CD4-positive, alpha-beta memory T cell (primary cell): ENCODE measurements at regions of chr9 and their contacts with region 1.

Region 1: GRCh38 chr9:114653556-114654159 is 3.9 kb downstream of the TEX53 start:
- DNase-seq: peak; percentile 77 to 86 (median 83)
- H3K4me3 ChIP-seq: no peak overlapping the region
- H3K4me3 Mint-ChIP-seq: no peak overlapping the region
- H3K27ac ChIP-seq: no peak overlapping the region
- H3K27ac Mint-ChIP-seq: peak overlapping the region in 4 of 7 donors; percentile 38 to 75 (median 64)
- H3K4me1 ChIP-seq: peaks cover 12% of the 10 kb centered on the region
- H3K4me1 Mint-ChIP-seq: peaks cover 7 to 18% (median 14%) of the 10 kb centered on the region in 4 donors
- H3K27me3 ChIP-seq: no peaks in the 10 kb centered on the region
- H3K27me3 Mint-ChIP-seq: no peaks in the 10 kb centered on the region

Region 2: GRCh38 chr9:114339130-114339908 is 314.3 kb before region 1 on chr9:
- CTCF ChIA-PET with region 1: interaction called, 10 read pairs
- POLR2A ChIA-PET with region 1: no interaction called
- intact Hi-C with region 1: loop called (anchors 1 kb)
- DNase-seq: peak in 4 of 5 donors; percentile 36 to 49 (median 42)
- H3K4me3 ChIP-seq: no peak overlapping the region
- H3K4me3 Mint-ChIP-seq: no peak overlapping the region
- H3K27ac ChIP-seq: no peak overlapping the region
- H3K27ac Mint-ChIP-seq: peak overlapping the region in 6 of 7 donors; percentile 36 to 73 (median 64)
- H3K4me1 ChIP-seq: no peaks in the 10 kb centered on the region
- H3K4me1 Mint-ChIP-seq: peaks cover 8 to 30% (median 14%) of the 10 kb centered on the region in 4 donors
- H3K27me3 ChIP-seq: no peaks in the 10 kb centered on the region
- H3K27me3 Mint-ChIP-seq: no peaks in the 10 kb centered on the region

Region 3: DNA sequence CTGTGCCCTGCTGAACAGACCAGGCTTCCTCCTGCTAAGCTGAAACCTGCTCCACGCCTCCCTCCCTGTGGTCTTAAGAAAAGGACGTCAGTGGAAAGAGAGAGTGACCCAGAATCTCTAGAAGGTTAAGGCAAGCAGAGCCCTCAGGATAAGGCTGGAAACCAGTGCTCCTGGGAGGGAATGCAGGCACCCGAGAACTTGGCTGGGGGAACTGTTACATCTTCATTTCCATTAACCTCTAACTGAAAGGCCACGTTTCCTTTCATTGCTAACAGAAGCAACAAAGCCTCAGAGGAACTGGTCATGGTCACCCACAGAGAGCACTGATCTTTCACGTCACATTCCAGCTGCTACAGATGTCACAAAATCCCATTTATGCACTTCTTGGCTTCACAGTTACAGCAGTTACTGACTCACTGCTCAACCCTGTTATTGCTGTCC is 239.8 kb before region 1 on chr9:
- CTCF ChIA-PET with region 1: interaction called, 371 read pairs
- POLR2A ChIA-PET with region 1: interaction called, 3 read pairs
- intact Hi-C with region 1: no loop called
- DNase-seq: no peak
- H3K4me3 ChIP-seq: no peak overlapping the region
- H3K4me3 Mint-ChIP-seq: no peak overlapping the region
- H3K27ac ChIP-seq: no peak overlapping the region
- H3K27ac Mint-ChIP-seq: peak overlapping the region in 2 of 7 donors; percentile 7 to 12
- H3K4me1 ChIP-seq: peaks cover 14% of the 10 kb centered on the region
- H3K4me1 Mint-ChIP-seq: peaks cover 14 to 23% (median 16%) of the 10 kb centered on the region in 4 donors
- H3K27me3 ChIP-seq: no peaks in the 10 kb centered on the region
- H3K27me3 Mint-ChIP-seq: no peaks in the 10 kb centered on the region

Region 4: DNA sequence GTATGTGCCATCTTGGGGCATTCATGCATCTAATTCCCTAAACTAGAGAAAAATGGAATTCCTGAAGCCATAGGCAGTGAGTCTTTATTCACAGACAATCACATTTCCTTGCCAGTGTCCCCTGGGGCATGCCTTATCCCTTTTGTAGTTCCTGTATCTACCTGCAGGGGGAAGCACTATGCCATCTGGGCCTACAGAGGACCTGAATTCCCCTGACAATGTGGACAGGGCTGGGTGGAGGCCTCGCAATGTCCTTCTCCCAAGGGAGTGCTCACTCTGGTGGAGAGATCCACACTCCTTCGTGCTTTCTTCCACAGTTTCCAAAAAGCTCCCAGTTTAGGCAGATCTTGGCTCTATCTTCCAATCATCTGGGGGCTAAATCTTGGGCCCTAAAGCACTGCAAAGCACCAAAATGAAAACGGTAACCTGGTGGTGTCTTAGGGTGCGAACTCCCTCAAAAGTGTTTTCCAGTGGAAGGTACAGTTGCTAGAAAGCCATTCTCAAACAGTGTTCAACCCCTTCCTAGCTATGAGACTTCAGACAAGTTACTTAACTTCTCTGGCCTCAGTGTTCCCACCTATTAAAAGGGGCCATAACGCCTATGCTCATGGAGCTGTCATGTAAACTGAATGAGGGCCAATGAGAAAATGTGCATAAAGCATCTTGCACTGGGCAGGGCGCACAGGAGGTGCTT is 165.9 kb before region 1 on chr9:
- CTCF ChIA-PET with region 1: interaction called, 142 read pairs
- POLR2A ChIA-PET with region 1: interaction called, 7 read pairs
- intact Hi-C with region 1: loop called (anchors 1 kb)
- DNase-seq: peak; percentile 66 to 75 (median 70)
- H3K4me3 ChIP-seq: no peak overlapping the region
- H3K4me3 Mint-ChIP-seq: no peak overlapping the region
- H3K27ac ChIP-seq: no peak overlapping the region
- H3K27ac Mint-ChIP-seq: peak overlapping the region in 2 of 7 donors; percentile 24 to 55
- H3K4me1 ChIP-seq: peaks cover 14% of the 10 kb centered on the region
- H3K4me1 Mint-ChIP-seq: peaks cover 12 to 35% (median 19%) of the 10 kb centered on the region in 4 donors
- H3K27me3 ChIP-seq: no peaks in the 10 kb centered on the region
- H3K27me3 Mint-ChIP-seq: peaks cover 0 to 4% of the 10 kb centered on the region in 2 donors

Region 5: DNA sequence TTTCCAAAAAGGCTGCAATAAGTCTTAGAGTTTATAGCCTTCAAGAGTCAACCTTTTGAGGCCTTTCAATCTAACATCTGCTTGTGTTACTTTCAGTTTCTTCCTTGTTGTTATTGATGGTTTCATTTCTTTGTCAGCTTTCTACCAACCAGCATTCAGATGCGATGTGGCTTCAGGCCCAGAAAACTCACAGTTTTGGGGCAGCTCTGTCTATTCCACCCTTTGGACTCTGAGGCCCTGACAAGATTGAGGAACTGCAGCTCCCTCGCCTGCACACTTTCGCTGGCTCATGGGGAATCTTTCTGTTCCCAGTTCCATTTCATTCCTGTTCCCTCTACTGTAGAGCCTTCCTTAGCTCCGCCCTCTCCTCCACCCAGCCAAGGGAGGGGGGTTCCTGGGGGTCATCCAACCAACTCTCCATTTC is 135.0 kb before region 1 on chr9:
- CTCF ChIA-PET with region 1: interaction called, 11 read pairs
- POLR2A ChIA-PET with region 1: no interaction called
- intact Hi-C with region 1: no loop called
- DNase-seq: no peak
- H3K4me3 ChIP-seq: no peak overlapping the region
- H3K4me3 Mint-ChIP-seq: no peak overlapping the region
- H3K27ac ChIP-seq: no peak overlapping the region
- H3K27ac Mint-ChIP-seq: peak overlapping the region in 1 of 7 donors; percentile 58
- H3K4me1 ChIP-seq: no peaks in the 10 kb centered on the region
- H3K4me1 Mint-ChIP-seq: peaks cover 0 to 8% (median 4%) of the 10 kb centered on the region in 4 donors
- H3K27me3 ChIP-seq: no peaks in the 10 kb centered on the region
- H3K27me3 Mint-ChIP-seq: peaks cover 21 to 24% of the 10 kb centered on the region in 2 donors

Region 6: GRCh38 chr9:114587385-114588202 is 66.1 kb before region 1 on chr9 and contains the start of gene ATP6V1G1:
- CTCF ChIA-PET with region 1: interaction called, 240 read pairs
- POLR2A ChIA-PET with region 1: interaction called, 54 read pairs
- intact Hi-C with region 1: loop called (anchors 1 kb)
- DNase-seq: peak; percentile 95 to 99 (median 97)
- H3K4me3 ChIP-seq: peak within 1 kb of the TSS; percentile 47 to 82
- H3K4me3 Mint-ChIP-seq: peak within 1 kb of the TSS; percentile 96 to 99 (median 99)
- H3K27ac ChIP-seq: peak within 1 kb of the TSS; percentile 93
- H3K27ac Mint-ChIP-seq: peak within 1 kb of the TSS; percentile 98 to 100 (median 99)
- H3K4me1 ChIP-seq: peaks cover 47% of the 10 kb centered on the region
- H3K4me1 Mint-ChIP-seq: peaks cover 35 to 56% (median 45%) of the 10 kb centered on the region in 4 donors
- H3K27me3 ChIP-seq: no peaks in the 10 kb centered on the region
- H3K27me3 Mint-ChIP-seq: no peaks in the 10 kb centered on the region
- total RNA-seq, gene ATP6V1G1: 121 TPM

Region 7: GRCh38 chr9:114616653-114617520 is 36.8 kb before region 1 on chr9:
- CTCF ChIA-PET with region 1: interaction called, 12 read pairs
- POLR2A ChIA-PET with region 1: interaction called, 4 read pairs
- intact Hi-C with region 1: loop called (anchors 5 kb)
- DNase-seq: no peak
- H3K4me3 ChIP-seq: no peak overlapping the region
- H3K4me3 Mint-ChIP-seq: peak overlapping the region in 4 of 8 donors; percentile 39 to 69 (median 63)
- H3K27ac ChIP-seq: no peak overlapping the region
- H3K27ac Mint-ChIP-seq: peak overlapping the region; percentile 65 to 89 (median 84)
- H3K4me1 ChIP-seq: peaks cover 34% of the 10 kb centered on the region
- H3K4me1 Mint-ChIP-seq: peaks cover 28 to 54% (median 42%) of the 10 kb centered on the region in 4 donors
- H3K27me3 ChIP-seq: no peaks in the 10 kb centered on the region
- H3K27me3 Mint-ChIP-seq: no peaks in the 10 kb centered on the region